SK-N-SH (cell line): ENCODE measurements at regions of chr1 and their contacts with region 1.

Region 1: DNA sequence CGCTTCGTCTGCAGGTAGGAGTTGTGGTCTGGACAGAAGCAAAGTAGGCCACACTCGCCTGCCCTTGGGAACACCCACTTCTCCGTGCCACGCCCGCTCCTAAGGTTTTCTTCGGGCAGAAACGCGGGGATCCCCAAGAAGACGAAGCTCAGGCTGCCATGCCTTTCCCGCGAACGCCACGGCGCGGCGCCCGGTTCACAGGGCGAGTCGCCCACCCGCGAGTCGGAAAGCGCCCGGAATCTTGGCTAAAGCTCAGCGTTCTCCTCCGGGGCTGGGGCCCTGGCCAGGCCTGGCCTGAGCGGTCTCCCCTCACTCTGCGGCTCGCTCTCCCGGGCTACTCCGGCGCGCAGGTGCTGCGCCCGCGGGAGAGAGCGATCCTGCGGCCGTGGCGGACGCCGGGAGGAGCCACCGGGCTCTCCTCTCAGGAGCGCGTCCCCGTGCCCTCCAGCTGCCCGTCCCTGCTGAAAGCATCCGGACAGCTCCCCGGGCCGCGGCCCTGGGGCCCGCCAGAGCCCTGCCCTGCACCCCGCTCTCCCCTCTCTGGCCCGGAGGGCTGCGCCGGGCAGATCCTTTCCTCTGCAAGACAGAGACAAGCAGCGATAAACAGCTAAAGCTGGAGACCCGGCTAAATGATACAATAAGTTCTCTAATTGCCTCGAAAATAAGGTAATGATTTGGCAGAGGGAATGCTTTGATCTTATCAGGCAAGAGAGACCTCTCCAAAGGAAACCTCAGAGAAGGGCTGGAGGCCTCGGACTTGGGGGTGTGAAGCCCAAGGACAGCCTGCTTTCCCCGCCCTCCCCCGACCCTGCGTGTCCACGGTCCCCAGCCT is 6.7 kb upstream of the WNT2B start:
- DNase-seq: peak; percentile 85
- H3K4me3 ChIP-seq: peak overlapping the region; percentile 53 to 60
- H3K27ac ChIP-seq: no peak overlapping the region
- H3K4me1 ChIP-seq: peaks cover 0 to 10% of the 10 kb centered on the region in 2 experiments; a peak in 1 of 4 replicates
- H3K27me3 ChIP-seq: no peaks in the 10 kb centered on the region
- CTCF ChIP-seq: peak; percentile 77
- EP300 ChIP-seq: no peak
- RAD21 ChIP-seq: peak; percentile 70

Region 2: DNA sequence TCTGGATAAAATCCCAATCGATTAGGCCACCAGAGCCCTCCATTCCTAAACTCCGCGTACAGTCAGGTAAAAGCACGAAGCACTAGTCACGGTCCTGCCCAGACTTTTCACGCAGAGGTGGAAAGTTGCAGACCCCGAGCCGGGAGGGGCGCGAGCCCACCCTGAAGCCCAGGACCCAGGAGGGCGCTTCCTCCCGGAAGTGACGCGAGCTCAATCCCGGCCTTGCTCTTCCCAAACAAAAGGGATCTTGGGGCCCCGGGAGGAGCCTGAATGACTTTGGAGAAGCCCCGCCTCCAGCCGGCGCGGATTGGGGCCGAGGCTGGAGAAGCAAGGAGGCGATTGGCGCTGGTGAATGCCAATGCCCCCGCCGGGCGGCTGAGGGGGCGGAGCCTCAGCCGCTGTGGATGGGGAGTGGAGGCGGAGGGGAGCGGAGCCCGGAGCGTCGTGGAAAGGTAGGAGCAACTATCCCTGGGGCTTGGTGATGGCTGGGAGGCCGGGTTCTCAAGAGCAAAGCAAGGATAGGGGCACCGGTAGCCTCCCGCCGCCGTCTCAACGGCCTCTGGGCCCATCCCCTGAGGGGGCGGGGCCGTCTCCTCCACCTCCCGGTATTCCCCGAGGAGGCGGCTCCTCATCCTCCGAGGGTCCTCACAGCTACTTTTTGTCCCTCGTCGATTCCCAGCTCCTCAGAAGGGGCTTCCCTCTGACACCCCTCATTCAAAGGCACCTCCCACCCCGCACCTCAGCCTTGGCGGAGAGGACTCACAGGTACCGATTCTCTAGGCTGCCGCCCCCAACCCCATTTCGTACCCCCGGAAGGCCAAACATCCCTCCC is 106.0 kb before region 1 on chr1 and contains the start of gene CTTNBP2NL:
- CTCF ChIA-PET with region 1: interaction called, 30 read pairs
- POLR2A ChIA-PET with region 1: no interaction called
- DNase-seq: peak; percentile 95
- H3K4me3 ChIP-seq: peak within 1 kb of the TSS; percentile 96 to 97
- H3K27ac ChIP-seq: peak within 1 kb of the TSS; percentile 90 to 98
- H3K4me1 ChIP-seq: peaks cover 15 to 23% of the 10 kb centered on the region in 2 experiments
- H3K27me3 ChIP-seq: no peaks in the 10 kb centered on the region
- CTCF ChIP-seq: no peak
- EP300 ChIP-seq: no peak; a peak in 1 of 4 replicates
- RAD21 ChIP-seq: no peak
- polyA plus RNA-seq, gene CTTNBP2NL: 4.9 and 7.5 TPM in 2 replicates

Region 3: DNA sequence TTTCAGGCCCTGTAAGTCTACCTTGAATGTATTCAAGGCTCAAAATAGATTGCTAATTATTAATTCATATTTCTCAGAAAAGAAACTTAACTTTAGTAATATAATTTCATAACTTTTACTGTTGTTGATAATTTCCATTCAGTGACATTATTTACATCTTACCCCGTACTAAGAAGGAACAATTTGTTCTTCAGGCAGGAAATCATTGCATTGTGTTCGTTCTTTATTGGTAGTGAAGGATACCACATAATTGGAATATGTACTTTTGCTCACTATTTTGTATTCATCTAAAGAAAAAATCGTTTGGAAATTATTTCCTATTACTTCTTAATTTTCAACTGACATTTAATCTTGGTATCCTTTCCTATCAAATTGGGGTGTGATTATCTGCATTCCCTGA is 66.6 kb before region 1 on chr1:
- CTCF ChIA-PET with region 1: no interaction called
- POLR2A ChIA-PET with region 1: no interaction called
- DNase-seq: no peak
- H3K4me3 ChIP-seq: no peak overlapping the region
- H3K27ac ChIP-seq: no peak overlapping the region
- H3K4me1 ChIP-seq: no peaks in the 10 kb centered on the region
- H3K27me3 ChIP-seq: no peaks in the 10 kb centered on the region
- CTCF ChIP-seq: no peak
- EP300 ChIP-seq: no peak
- RAD21 ChIP-seq: no peak

Region 4: DNA sequence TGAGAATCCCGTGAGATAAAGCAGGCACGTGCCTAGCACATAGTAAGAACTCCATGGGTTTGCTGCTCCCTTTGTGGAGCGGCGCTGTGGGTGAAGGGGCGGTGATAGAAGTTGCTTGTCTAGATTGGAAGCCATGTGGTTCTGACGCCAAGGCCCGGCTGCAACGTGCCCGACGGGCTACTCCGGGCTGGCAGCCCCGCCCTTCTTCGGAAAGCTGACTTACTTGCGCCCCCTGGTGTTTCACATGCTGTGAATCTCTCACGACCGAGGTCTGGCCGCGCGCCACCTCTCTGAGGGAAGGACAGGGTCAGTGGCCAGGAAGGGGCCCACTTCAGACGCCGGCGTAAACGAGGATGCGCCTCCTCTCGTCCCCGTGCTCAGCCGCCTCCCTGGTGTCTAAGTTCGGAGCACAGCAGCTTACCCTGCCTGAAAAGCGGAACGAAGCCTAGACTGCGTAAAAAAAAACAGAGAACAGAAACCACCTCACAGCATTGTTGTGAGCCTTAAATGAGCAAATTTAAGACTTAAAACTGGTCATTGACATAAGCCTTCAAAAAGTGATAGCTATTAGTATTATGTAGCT is 35.9 kb before region 1 on chr1:
- CTCF ChIA-PET with region 1: interaction called, 23 read pairs
- POLR2A ChIA-PET with region 1: no interaction called
- DNase-seq: peak; percentile 85
- H3K4me3 ChIP-seq: peak overlapping the region; percentile 24 to 35; a peak in 3 of 4 replicates
- H3K27ac ChIP-seq: peak overlapping the region in 1 of 2 experiments; percentile 15; a peak in 1 of 4 replicates
- H3K4me1 ChIP-seq: peaks cover 6 to 9% of the 10 kb centered on the region in 2 experiments; a peak in 2 of 4 replicates
- H3K27me3 ChIP-seq: no peaks in the 10 kb centered on the region
- CTCF ChIP-seq: peak; percentile 80
- EP300 ChIP-seq: no peak
- RAD21 ChIP-seq: peak; percentile 79

Region 5: DNA sequence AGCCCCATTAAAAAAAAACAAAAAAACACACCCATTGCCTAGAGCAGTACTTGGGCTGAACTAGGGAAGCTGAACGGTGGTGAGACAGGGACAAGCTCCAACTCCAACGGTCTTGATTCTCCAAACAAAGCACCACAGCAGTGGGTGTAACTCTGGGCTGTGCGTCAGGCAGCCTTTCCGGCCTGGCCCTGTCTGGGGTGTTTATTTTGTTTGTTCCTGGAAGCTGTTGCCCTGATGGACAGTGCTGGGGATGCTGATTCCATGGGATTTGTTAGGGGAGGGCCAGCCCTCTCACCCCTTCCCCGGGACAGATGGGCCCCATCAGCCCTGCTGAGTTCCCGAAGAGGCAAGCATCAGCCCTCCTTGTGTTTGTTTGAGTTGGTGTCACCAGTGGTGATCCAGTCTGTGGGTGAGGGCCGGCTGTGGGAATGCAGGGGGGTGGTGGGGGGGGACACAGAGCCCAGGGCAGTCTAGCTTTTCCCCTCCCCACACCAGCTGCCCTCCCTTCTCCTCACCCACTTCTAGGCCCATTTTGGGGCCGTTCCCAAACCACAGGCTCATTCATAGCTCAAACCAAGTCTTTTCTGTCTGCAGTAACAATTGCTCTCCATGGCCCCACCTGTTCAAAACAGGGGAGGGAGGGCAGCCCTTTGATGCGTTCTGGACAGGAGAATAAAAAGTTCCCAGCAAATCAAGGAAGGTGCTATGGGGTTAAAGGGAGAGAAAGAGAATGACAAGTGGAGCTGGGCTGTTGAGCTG is 11.3 kb after region 1 on chr1:
- CTCF ChIA-PET with region 1: interaction called, 12 read pairs
- POLR2A ChIA-PET with region 1: interaction called, 3 read pairs
- DNase-seq: no peak
- H3K4me3 ChIP-seq: no peak overlapping the region
- H3K27ac ChIP-seq: no peak overlapping the region
- H3K4me1 ChIP-seq: peaks cover 0 to 3% of the 10 kb centered on the region in 2 experiments; a peak in 1 of 4 replicates
- H3K27me3 ChIP-seq: no peaks in the 10 kb centered on the region
- CTCF ChIP-seq: no peak
- EP300 ChIP-seq: no peak
- RAD21 ChIP-seq: no peak

Region 6: GRCh38 chr1:112614460-112615065 is 112.5 kb after region 1 on chr1:
- CTCF ChIA-PET with region 1: interaction called, 18 read pairs
- POLR2A ChIA-PET with region 1: interaction called, 3 read pairs
- DNase-seq: peak; percentile 27
- H3K4me3 ChIP-seq: no peak overlapping the region
- H3K27ac ChIP-seq: no peak overlapping the region
- H3K4me1 ChIP-seq: peaks cover 0 to 5% of the 10 kb centered on the region in 2 experiments; a peak in 2 of 4 replicates
- H3K27me3 ChIP-seq: no peaks in the 10 kb centered on the region
- CTCF ChIP-seq: peak; percentile 85
- EP300 ChIP-seq: no peak
- RAD21 ChIP-seq: peak; percentile 64

Region 7: DNA sequence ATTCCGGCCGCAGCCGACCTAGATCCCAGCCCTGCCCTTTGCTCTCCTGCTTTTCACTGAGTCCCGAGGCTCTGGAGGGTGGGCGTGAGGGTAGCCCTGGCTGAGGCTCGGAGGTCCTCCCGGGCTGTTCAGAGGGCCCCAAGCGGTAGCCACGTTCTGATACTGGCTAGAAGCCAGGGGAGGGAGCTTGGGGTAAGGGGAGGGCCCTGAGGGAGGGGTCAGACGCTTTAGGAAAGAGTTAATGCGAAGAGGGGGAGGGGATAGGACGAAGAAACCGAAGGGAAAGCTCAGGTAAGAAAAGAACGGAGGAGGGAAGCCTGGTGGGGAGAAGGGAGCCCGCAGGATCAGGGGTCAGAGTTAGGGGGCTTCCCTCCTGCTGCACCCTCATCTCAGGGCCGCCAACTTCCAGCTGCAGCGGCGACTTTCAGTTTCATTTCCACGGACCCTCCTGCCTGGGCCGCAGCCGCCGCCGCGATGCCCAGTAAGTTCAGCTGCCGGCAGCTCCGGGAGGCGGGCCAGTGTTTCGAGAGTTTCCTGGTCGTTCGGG is 172.5 kb after region 1 on chr1 and contains the start of gene MOV10:
- CTCF ChIA-PET with region 1: interaction called, 12 read pairs
- POLR2A ChIA-PET with region 1: interaction called, 7 read pairs
- DNase-seq: peak; percentile 79
- H3K4me3 ChIP-seq: peak within 1 kb of the TSS; percentile 79 to 89
- H3K27ac ChIP-seq: peak within 1 kb of the TSS; percentile 75 to 94
- H3K4me1 ChIP-seq: peaks cover 11 to 12% of the 10 kb centered on the region in 2 experiments; a peak in 3 of 4 replicates
- H3K27me3 ChIP-seq: no peaks in the 10 kb centered on the region
- CTCF ChIP-seq: no peak
- EP300 ChIP-seq: no peak
- RAD21 ChIP-seq: no peak
- polyA plus RNA-seq, gene MOV10: 81.0 and 87.4 TPM in 2 replicates

Region 8: DNA sequence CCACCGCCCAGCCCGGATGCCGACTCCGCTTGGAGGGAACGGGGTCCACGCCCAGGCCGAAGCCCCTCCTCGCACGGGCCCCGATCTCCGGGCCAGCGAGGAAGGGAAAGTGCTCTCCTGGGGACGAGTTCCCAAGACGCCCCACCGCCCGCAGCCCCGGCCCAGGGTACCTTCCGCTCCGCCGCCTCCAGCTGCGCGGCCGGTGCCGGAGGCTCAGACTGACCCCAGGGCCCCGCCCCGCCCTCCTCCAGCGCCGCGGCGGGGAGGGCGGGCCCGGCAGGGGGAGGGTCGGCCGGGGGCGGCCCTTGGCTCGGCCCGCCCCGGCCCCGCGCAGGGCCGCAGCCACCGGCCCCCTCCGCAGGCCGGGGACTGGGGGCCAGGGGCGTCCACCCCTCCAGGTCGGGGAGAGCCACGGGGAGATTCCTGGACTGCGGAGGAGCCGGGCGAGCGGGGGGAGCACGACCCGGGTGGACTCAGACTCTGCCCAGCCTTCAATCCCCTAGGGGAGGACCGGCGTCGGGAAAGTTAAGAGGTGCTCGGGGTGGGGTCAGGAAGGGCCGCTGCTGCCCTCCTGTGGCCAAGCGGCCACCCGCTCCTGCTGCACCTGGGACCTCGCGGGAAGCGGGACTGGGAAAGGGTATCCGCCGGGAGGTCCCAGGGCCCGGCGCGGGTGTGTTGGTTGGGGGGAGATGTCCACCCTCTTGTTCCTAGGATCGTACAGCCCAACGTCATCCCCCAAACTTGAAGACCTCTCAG is 205.1 kb after region 1 on chr1 and contains the start of gene RHOC:
- CTCF ChIA-PET with region 1: interaction called, 47 read pairs
- POLR2A ChIA-PET with region 1: no interaction called
- DNase-seq: peak; percentile 96
- H3K4me3 ChIP-seq: peak within 1 kb of the TSS; percentile 93 to 94
- H3K27ac ChIP-seq: peak within 1 kb of the TSS; percentile 77 to 87
- H3K4me1 ChIP-seq: peaks cover 10 to 37% of the 10 kb centered on the region in 2 experiments; a peak in 3 of 4 replicates
- H3K27me3 ChIP-seq: no peaks in the 10 kb centered on the region
- CTCF ChIP-seq: peak; percentile 84
- EP300 ChIP-seq: no peak
- RAD21 ChIP-seq: peak; percentile 80
- polyA plus RNA-seq, gene RHOC: 961 and 1,028 TPM in 2 replicates

Region 9: GRCh38 chr1:112833806-112834205 is 331.8 kb after region 1 on chr1:
- CTCF ChIA-PET with region 1: no interaction called
- POLR2A ChIA-PET with region 1: no interaction called
- DNase-seq: no peak
- H3K4me3 ChIP-seq: no peak overlapping the region
- H3K27ac ChIP-seq: no peak overlapping the region
- H3K4me1 ChIP-seq: no peaks in the 10 kb centered on the region; a peak in 1 of 4 replicates
- H3K27me3 ChIP-seq: no peaks in the 10 kb centered on the region
- CTCF ChIP-seq: no peak
- EP300 ChIP-seq: no peak
- RAD21 ChIP-seq: no peak